ENCODE measurements at regions of chr3 and their contacts with region 1.

Region 1: DNA sequence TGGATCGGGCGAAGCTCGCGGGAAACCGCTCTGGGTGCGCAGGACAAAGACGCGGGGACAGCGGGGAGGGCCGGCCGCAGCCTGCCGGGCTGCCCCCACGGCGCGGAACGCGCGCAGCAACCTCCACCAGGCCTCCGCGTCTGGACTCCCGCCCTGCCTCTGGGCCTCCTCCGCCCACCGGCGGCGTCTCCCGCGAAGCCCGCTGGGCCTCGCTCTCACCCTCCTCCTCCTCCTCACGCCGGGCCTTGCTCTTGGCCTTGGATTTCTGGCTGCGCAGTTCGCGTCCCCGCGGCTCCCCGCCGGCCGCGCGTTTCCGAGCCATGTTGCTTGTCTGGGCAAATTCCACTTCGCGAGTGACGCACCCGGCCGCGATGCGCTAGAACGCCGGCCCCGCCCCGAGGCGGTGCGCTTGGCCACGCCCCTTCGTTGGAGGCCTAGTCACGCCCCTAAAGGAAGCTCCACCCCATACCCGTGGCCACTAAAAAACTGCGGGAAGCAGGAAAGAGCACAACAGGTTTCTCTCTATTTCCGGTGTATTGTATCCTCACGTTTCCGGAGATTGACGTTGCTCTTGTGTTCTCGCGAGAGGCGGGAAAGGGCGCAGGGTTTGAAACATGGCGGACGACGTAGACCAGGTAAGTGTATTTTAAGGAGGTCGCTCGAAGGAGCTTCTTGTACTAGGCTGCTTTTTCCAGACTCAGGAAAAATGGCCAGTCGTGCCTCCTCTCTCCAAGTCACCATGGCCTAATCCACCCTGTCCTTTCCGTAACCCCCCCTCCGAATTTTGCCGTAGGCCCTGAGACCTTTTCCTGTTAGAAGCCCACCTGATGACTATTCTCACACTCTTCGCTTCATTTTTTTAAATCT is at the starts of genes LSM3 and XPC:
- DNase-seq: peak; percentile 99
- ATAC-seq: peak; percentile 96
- H3K4me3 ChIP-seq: peak within 1 kb of the TSS; percentile 65 to 97 (median 89)
- H3K4me3 Mint-ChIP-seq: peak within 1 kb of the TSS; percentile 95
- H3K27ac ChIP-seq: peak within 1 kb of the TSS; percentile 85 to 97
- H3K27ac Mint-ChIP-seq: peak within 1 kb of the TSS; percentile 99
- H3K4me1 ChIP-seq: peaks cover 39 to 42% of the 10 kb centered on the region in 2 donors
- H3K4me1 Mint-ChIP-seq: peaks cover 65% of the 10 kb centered on the region
- H3K27me3 ChIP-seq: no peaks in the 10 kb centered on the region
- H3K27me3 Mint-ChIP-seq: no peaks in the 10 kb centered on the region
- CTCF ChIP-seq: no peak
- total RNA-seq, gene LSM3: 9.7 and 10.0 TPM in 2 replicates
- total RNA-seq, gene XPC: 61.5 and 67.6 TPM in 2 replicates

Region 2: GRCh38 chr3:12663936-12664908 is 1514.3 kb before region 1 on chr3 and contains the start of gene RAF1:
- CTCF ChIA-PET with region 1: no interaction called
- POLR2A ChIA-PET with region 1: no interaction called
- intact Hi-C with region 1: loop called (anchors 5 kb)
- DNase-seq: peak; percentile 98
- ATAC-seq: peak; percentile 92
- H3K4me3 ChIP-seq: peak within 1 kb of the TSS; percentile 76 to 99 (median 85)
- H3K4me3 Mint-ChIP-seq: peak within 1 kb of the TSS; percentile 99
- H3K27ac ChIP-seq: peak within 1 kb of the TSS; percentile 95 to 98
- H3K27ac Mint-ChIP-seq: peak within 1 kb of the TSS; percentile 99
- H3K4me1 ChIP-seq: peaks cover 30 to 33% of the 10 kb centered on the region in 2 donors
- H3K4me1 Mint-ChIP-seq: peaks cover 40% of the 10 kb centered on the region
- H3K27me3 ChIP-seq: no peaks in the 10 kb centered on the region
- H3K27me3 Mint-ChIP-seq: no peaks in the 10 kb centered on the region
- CTCF ChIP-seq: no peak
- total RNA-seq, gene RAF1: 126 and 135 TPM in 2 replicates

Region 3: GRCh38 chr3:13414040-13414729 is 764.3 kb before region 1 on chr3:
- CTCF ChIA-PET with region 1: no interaction called
- POLR2A ChIA-PET with region 1: no interaction called
- intact Hi-C with region 1: loop called (anchors 5 kb)
- DNase-seq: peak; percentile 94
- ATAC-seq: peak; percentile 92
- H3K4me3 ChIP-seq: peak overlapping the region in 4 of 5 experiments; percentile 21 to 33 (median 29)
- H3K4me3 Mint-ChIP-seq: peak overlapping the region; percentile 73
- H3K27ac ChIP-seq: peak overlapping the region; percentile 90 to 91
- H3K27ac Mint-ChIP-seq: peak overlapping the region; percentile 98
- H3K4me1 ChIP-seq: peaks cover 60 to 72% of the 10 kb centered on the region in 2 donors
- H3K4me1 Mint-ChIP-seq: peaks cover 61% of the 10 kb centered on the region
- H3K27me3 ChIP-seq: no peaks in the 10 kb centered on the region
- H3K27me3 Mint-ChIP-seq: no peaks in the 10 kb centered on the region
- CTCF ChIP-seq: peak; percentile 26

Region 4: DNA sequence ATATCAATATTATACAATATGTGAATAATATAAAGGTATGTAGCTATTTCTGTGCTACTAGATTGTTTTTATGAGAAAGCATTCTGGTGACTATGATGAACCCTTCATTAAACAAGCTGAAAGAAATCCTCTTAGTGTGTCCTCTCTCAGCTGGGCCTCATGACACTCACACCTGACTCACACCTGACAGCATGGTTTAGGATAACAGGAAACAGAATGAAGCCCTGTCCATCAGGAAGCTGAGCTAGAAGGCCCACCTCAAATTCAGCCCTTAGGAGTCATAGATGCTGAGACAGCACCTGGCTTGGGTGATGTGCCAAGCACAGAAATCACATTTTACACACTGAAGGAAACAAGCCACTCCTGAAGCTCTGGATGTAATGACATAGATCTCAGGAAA is 84.6 kb before region 1 on chr3:
- CTCF ChIA-PET with region 1: no interaction called
- POLR2A ChIA-PET with region 1: no interaction called
- intact Hi-C with region 1: no loop called
- DNase-seq: no peak
- ATAC-seq: no peak
- H3K4me3 ChIP-seq: no peak overlapping the region
- H3K4me3 Mint-ChIP-seq: no peak overlapping the region
- H3K27ac ChIP-seq: no peak overlapping the region
- H3K27ac Mint-ChIP-seq: no peak overlapping the region
- H3K4me1 ChIP-seq: no peaks in the 10 kb centered on the region
- H3K4me1 Mint-ChIP-seq: no peaks in the 10 kb centered on the region
- H3K27me3 ChIP-seq: peaks cover 0 to 2% (median 0%) of the 10 kb centered on the region in 4 experiments
- H3K27me3 Mint-ChIP-seq: peaks cover 41% of the 10 kb centered on the region
- CTCF ChIP-seq: no peak

Region 5: DNA sequence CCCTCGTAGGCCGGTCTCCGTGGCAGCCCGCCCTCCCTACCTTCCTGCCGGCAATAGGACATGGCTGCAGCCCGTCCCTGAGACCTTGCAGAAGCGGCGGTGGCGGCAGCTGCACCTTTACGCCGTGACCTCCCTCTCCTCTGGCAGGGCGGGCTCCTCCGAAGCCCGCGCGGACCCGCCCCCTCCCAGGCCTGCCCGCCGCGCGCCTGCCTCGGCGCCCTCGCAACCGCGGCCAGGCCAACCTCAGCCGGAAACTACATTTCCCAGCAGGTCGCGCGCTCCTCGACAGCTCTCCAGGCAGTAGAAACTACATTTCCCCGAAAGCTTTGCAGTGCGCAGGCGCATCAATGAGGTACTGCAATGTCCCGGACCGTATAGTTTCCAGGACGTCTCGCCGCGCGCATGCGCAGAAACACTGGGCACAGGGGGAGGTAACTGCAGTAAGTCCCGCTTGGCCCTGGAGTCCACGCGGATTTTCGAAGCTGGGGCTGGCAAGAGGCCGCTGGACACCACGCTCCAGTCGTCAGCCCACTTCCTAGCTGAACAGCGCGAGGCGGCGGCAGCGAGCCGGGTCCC is 53.8 kb before region 1 on chr3 and contains the starts of genes CHCHD4 and TMEM43:
- CTCF ChIA-PET with region 1: interaction called, 7 read pairs
- POLR2A ChIA-PET with region 1: interaction called, 28 read pairs
- intact Hi-C with region 1: loop called (anchors 1 kb)
- DNase-seq: peak; percentile 99
- ATAC-seq: peak; percentile 85
- H3K4me3 ChIP-seq: peak within 1 kb of the TSS; percentile 74 to 97 (median 85)
- H3K4me3 Mint-ChIP-seq: peak within 1 kb of the TSS; percentile 97
- H3K27ac ChIP-seq: peak within 1 kb of the TSS; percentile 72 to 89
- H3K27ac Mint-ChIP-seq: peak within 1 kb of the TSS; percentile 95
- H3K4me1 ChIP-seq: peaks cover 24 to 32% of the 10 kb centered on the region in 2 donors
- H3K4me1 Mint-ChIP-seq: peaks cover 45% of the 10 kb centered on the region
- H3K27me3 ChIP-seq: no peaks in the 10 kb centered on the region
- H3K27me3 Mint-ChIP-seq: no peaks in the 10 kb centered on the region
- CTCF ChIP-seq: no peak
- total RNA-seq, gene CHCHD4: 5.1 and 8.0 TPM in 2 replicates
- total RNA-seq, gene TMEM43: 37.4 and 37.6 TPM in 2 replicates

Region 6: DNA sequence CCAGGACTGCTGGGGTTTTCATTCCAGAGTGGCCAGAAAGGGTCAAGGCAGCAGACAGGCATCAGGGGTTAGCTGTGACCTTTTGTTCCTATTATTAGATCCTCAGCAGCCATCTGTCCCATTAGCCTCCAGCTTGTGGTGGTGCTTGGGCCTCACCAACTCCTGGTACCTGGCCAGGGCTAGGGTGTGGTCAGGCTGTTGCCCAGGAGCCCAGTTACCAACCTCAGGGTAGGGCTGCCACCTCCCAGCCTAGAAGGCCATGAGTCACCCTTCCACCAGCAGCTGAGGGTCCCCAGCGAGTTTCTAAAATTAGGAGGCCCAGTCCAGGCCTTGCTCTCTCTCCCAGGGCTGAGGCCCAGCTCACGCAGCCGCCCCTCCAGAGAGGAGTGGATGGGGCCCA is 41.5 kb before region 1 on chr3:
- CTCF ChIA-PET with region 1: no interaction called
- POLR2A ChIA-PET with region 1: no interaction called
- intact Hi-C with region 1: no loop called
- DNase-seq: no peak
- ATAC-seq: no peak
- H3K4me3 ChIP-seq: no peak overlapping the region
- H3K4me3 Mint-ChIP-seq: no peak overlapping the region
- H3K27ac ChIP-seq: no peak overlapping the region
- H3K27ac Mint-ChIP-seq: no peak overlapping the region
- H3K4me1 ChIP-seq: no peaks in the 10 kb centered on the region
- H3K4me1 Mint-ChIP-seq: no peaks in the 10 kb centered on the region
- H3K27me3 ChIP-seq: no peaks in the 10 kb centered on the region
- H3K27me3 Mint-ChIP-seq: no peaks in the 10 kb centered on the region
- CTCF ChIP-seq: no peak

Region 7: GRCh38 chr3:14203521-14204079 is 25.1 kb after region 1 on chr3:
- CTCF ChIA-PET with region 1: interaction called, 13 read pairs
- POLR2A ChIA-PET with region 1: interaction called, 4 read pairs
- intact Hi-C with region 1: no loop called
- DNase-seq: peak; percentile 61
- ATAC-seq: no peak
- H3K4me3 ChIP-seq: no peak overlapping the region
- H3K4me3 Mint-ChIP-seq: no peak overlapping the region
- H3K27ac ChIP-seq: no peak overlapping the region
- H3K27ac Mint-ChIP-seq: no peak overlapping the region
- H3K4me1 ChIP-seq: no peaks in the 10 kb centered on the region
- H3K4me1 Mint-ChIP-seq: peaks cover 2% of the 10 kb centered on the region
- H3K27me3 ChIP-seq: no peaks in the 10 kb centered on the region
- H3K27me3 Mint-ChIP-seq: no peaks in the 10 kb centered on the region
- CTCF ChIP-seq: peak; percentile 87

Region 8: DNA sequence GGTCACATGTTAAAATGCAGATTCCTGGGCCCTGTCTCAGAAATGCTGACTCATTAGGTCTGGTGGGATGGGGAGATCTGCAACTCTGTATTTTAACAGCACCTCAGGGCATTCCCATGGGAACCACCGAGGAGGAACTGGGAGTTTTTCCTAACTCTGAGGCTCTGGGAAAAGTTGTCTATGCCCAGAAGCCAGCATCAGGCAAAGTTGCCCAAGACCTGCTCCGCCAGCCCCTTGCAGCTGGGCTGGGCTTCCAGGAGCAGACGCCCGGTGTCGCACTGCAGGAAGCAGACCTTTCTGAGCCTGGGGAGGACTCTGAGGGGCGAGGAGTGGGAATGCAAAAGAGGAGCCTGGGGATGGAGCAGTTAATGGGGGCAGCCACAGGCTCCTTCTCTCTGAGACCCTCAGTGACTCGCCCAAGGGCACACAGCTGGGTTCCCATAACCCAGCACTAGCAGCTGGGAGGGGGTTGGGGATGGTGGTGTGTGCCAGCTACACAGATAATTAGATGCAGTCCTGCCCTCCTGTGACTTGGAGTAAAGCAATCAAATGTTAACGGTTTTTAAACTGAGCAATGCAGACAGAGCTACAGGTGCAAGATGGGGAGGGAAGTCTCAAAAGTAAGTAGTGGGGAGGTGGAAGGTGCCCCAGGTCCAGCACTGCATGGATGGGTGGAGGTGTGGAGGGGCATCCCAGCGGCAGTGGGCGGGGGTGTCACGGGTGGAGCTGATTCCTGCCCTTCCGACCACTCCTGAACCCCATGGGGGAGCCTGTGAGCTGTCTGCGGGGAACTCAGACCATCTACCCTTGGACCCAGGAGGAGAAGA is 100.5 kb after region 1 on chr3:
- CTCF ChIA-PET with region 1: no interaction called
- POLR2A ChIA-PET with region 1: no interaction called
- intact Hi-C with region 1: no loop called
- DNase-seq: no peak
- ATAC-seq: no peak
- H3K4me3 ChIP-seq: no peak overlapping the region
- H3K4me3 Mint-ChIP-seq: no peak overlapping the region
- H3K27ac ChIP-seq: no peak overlapping the region
- H3K27ac Mint-ChIP-seq: no peak overlapping the region
- H3K4me1 ChIP-seq: no peaks in the 10 kb centered on the region
- H3K4me1 Mint-ChIP-seq: no peaks in the 10 kb centered on the region
- H3K27me3 ChIP-seq: peaks cover 0 to 4% (median 0%) of the 10 kb centered on the region in 4 experiments
- H3K27me3 Mint-ChIP-seq: peaks cover 6% of the 10 kb centered on the region
- CTCF ChIP-seq: no peak

Region 9: GRCh38 chr3:14431892-14432834 is 253.7 kb after region 1 on chr3:
- CTCF ChIA-PET with region 1: no interaction called
- POLR2A ChIA-PET with region 1: interaction called, 6 read pairs
- intact Hi-C with region 1: loop called (anchors 1 kb)
- DNase-seq: peak; percentile 94
- ATAC-seq: peak; percentile 78
- H3K4me3 ChIP-seq: peak overlapping the region in 4 of 5 experiments; percentile 5 to 59 (median 34)
- H3K4me3 Mint-ChIP-seq: peak overlapping the region; percentile 80
- H3K27ac ChIP-seq: peak overlapping the region; percentile 93 to 98
- H3K27ac Mint-ChIP-seq: peak overlapping the region; percentile 94
- H3K4me1 ChIP-seq: peaks cover 75 to 89% of the 10 kb centered on the region in 2 donors
- H3K4me1 Mint-ChIP-seq: peaks cover 88% of the 10 kb centered on the region
- H3K27me3 ChIP-seq: no peaks in the 10 kb centered on the region
- H3K27me3 Mint-ChIP-seq: no peaks in the 10 kb centered on the region
- CTCF ChIP-seq: no peak

Region 10: DNA sequence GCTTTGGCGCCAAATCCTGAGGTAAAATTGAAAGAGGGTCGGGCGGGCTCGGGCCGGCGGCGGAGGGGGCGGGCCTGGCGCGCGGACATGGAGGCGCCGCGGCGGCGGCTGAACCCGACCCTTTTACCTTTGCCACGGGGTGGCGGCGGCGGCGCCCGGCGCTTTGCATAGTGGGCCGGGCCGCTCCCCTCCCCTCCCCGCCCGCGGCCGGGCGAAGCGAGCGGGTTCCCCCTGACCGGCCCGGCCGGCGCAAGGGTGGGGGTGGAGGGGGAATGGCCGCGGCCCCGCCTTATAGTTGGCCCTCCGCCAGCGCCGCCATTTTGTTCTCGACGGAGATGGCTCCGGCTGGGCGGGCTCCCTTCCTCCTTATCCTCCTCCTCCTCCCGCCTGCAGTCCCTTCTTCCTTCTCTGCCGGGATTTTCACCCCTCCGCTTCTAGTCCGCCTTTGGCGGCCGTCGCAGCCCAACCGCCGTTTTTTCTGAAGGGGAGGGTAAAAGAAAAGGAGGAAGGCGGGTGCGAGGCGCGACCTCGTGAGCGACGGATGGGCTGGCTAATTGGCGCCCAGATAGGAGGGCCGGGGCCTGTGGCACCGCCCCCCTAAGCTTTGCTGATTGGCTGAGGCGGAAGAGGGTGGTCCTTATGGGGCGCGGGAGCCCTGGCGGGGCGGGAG is 769.5 kb after region 1 on chr3:
- CTCF ChIA-PET with region 1: no interaction called
- POLR2A ChIA-PET with region 1: no interaction called
- intact Hi-C with region 1: loop called (anchors 1 kb)
- DNase-seq: peak; percentile 98
- ATAC-seq: peak; percentile 86
- H3K4me3 ChIP-seq: peak overlapping the region; percentile 30 to 100 (median 94)
- H3K4me3 Mint-ChIP-seq: peak overlapping the region; percentile 99
- H3K27ac ChIP-seq: peak overlapping the region; percentile 98 to 99
- H3K27ac Mint-ChIP-seq: peak overlapping the region; percentile 100
- H3K4me1 ChIP-seq: peaks cover 25 to 29% of the 10 kb centered on the region in 2 donors
- H3K4me1 Mint-ChIP-seq: peaks cover 49% of the 10 kb centered on the region
- H3K27me3 ChIP-seq: no peaks in the 10 kb centered on the region
- H3K27me3 Mint-ChIP-seq: no peaks in the 10 kb centered on the region
- CTCF ChIP-seq: no peak

Measured in B cell (primary cell).